Dendritic cell treated with granulocyte-macrophage colony-stimulating factor and Interleukin-4, amounts not matched to agents 40 ng/mL and 50 ng/mL, for 4 days (primary cell): ENCODE measurements at regions of chr7 and their contacts with region 1.

Region 1: DNA sequence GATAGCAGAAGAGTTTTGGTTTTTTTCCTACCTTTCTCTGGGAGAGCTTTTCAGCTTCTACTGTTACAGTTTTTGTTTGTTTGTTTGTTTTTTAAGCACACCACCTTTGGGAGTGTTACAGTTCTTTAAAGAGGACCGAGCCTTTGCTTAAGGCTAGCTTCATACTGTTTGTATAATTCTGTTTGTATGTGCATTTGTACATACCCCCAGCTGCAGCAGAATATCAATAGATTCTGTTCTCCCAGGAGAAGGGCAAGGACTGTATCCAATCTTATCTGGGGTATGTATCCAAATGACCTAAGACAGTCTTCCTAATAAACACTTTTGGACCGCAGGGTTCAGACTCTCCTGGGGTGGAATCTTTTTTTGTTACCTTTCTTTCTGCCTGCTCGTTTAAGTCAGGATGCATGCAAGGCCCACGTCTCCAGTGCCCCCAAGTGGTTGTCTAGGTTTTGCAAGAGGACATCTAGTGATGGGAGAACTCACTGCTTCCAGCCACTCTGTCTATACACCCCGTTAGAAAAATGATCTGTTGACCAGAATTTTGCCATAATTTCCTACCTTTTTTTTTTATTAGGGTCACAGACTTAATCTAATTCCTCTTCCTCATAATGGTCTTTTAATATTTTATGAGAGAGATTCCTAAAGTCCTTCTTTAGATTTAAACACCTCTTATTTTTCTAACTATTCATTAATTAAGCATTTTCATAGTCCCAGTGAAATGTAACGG is 23.9 kb downstream of the NRF1 start:
- H3K4me3 Mint-ChIP-seq: no peak overlapping the region
- H3K27ac Mint-ChIP-seq: no peak overlapping the region
- H3K4me1 Mint-ChIP-seq: peaks cover 12% of the 10 kb centered on the region
- H3K27me3 Mint-ChIP-seq: no peaks in the 10 kb centered on the region

Region 2: GRCh38 chr7:129224251-129225205 is 410.9 kb before region 1 on chr7 and contains the start of gene AHCYL2:
- intact Hi-C with region 1: loop called (anchors 10 kb)
- H3K4me3 Mint-ChIP-seq: peak within 1 kb of the TSS; percentile 96
- H3K27ac Mint-ChIP-seq: peak within 1 kb of the TSS; percentile 99
- H3K4me1 Mint-ChIP-seq: peaks cover 40% of the 10 kb centered on the region
- H3K27me3 Mint-ChIP-seq: no peaks in the 10 kb centered on the region

Region 3: DNA sequence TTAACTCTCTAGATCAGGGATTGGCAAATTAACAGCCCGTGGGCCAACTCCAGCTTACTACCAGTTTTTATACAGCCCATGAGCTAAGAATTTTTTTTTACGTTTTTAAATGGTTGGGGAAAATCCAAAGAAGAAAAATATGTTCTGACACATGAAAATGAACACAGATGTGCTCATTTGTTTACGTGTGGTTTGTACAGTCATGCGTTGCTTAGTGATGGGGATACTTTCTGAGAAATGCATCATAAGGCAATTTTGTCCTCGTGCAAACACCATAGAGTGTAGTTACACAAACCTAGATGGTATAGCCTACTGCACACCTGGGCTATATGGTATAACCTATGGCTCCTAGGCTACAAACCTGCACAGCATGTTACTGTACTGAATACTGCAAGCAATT is 141.4 kb before region 1 on chr7:
- intact Hi-C with region 1: loop called (anchors 10 kb)
- H3K4me3 Mint-ChIP-seq: no peak overlapping the region
- H3K27ac Mint-ChIP-seq: no peak overlapping the region
- H3K4me1 Mint-ChIP-seq: peaks cover 29% of the 10 kb centered on the region
- H3K27me3 Mint-ChIP-seq: peaks cover 10% of the 10 kb centered on the region

Region 4: GRCh38 chr7:129578829-129579228 is 56.6 kb before region 1 on chr7:
- intact Hi-C with region 1: loop called (anchors 2 kb)
- H3K4me3 Mint-ChIP-seq: no peak overlapping the region
- H3K27ac Mint-ChIP-seq: no peak overlapping the region
- H3K4me1 Mint-ChIP-seq: no peaks in the 10 kb centered on the region
- H3K27me3 Mint-ChIP-seq: peaks cover 4% of the 10 kb centered on the region